Tibial artery (tissue), 4 donors: ENCODE measurements at regions of chr12 and their contacts with region 1.

Region 1: DNA sequence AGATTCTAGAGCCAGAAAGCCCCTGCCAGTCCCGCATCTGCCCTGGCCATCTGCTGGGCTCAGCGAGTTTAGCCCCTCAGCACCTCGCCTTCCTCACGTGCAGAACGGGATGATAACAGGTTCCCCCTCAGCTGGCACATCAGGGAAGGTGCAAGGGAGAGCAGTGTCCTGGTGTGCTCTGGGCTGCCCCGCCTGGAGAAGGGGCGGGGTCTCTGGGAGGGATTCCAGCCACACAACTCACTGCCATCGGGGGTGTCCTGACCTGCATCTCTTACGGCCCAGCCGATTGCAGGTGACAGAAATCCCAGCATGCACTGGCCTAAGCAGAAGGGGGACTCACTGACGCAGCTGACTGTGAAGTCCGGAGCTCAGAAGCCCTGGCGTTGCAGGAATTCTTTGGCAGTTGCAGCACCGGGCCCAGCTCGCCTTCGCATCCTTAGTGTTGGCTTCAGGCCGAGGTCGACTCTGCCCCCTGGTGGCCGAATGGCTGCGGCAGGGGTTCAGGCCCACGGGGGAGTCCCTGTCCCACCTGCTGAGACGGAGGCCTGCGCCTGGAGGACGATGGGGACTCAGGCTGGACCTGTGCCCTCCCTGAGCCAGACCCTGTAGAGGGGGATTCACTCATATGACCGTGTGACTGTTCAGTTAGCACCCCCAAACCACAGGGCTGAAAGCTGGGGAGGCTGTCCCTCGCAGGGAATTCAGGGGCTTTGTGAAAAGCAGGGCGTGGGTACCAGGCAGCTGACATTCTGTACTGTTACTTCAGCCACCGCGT is 178.6 kb downstream of the ADGRD1 start:
- DNase-seq: peak; percentile 64 to 66
- H3K4me3 ChIP-seq: no peak overlapping the region
- H3K27ac ChIP-seq: no peak overlapping the region
- H3K4me1 ChIP-seq: peaks cover 0 to 11% (median 8%) of the 10 kb centered on the region in 4 donors
- H3K27me3 ChIP-seq: no peaks in the 10 kb centered on the region
- CTCF ChIP-seq: peak; percentile 63 to 70

Region 2: GRCh38 chr12:130916251-130916911 is 215.9 kb before region 1 on chr12:
- intact Hi-C with region 1: loop called (anchors 2 kb)
- DNase-seq: peak; percentile 61 to 69
- H3K4me3 ChIP-seq: peak overlapping the region in 1 of 2 donors; percentile 29
- H3K27ac ChIP-seq: no peak overlapping the region
- H3K4me1 ChIP-seq: peaks cover 0 to 8% (median 0%) of the 10 kb centered on the region in 4 donors
- H3K27me3 ChIP-seq: peaks cover 0 to 19% of the 10 kb centered on the region in 2 donors
- CTCF ChIP-seq: peak; percentile 97

Region 3: GRCh38 chr12:131046813-131047788 is 85.2 kb before region 1 on chr12:
- intact Hi-C with region 1: no loop called
- DNase-seq: peak in 1 of 2 donors; percentile 70
- H3K4me3 ChIP-seq: no peak overlapping the region
- H3K27ac ChIP-seq: no peak overlapping the region
- H3K4me1 ChIP-seq: no peaks in the 10 kb centered on the region
- H3K27me3 ChIP-seq: no peaks in the 10 kb centered on the region
- CTCF ChIP-seq: no peak

Region 4: GRCh38 chr12:131092901-131093603 is 39.3 kb before region 1 on chr12:
- intact Hi-C with region 1: no loop called
- DNase-seq: peak; percentile 18 to 61
- H3K4me3 ChIP-seq: no peak overlapping the region
- H3K27ac ChIP-seq: no peak overlapping the region
- H3K4me1 ChIP-seq: no peaks in the 10 kb centered on the region
- H3K27me3 ChIP-seq: no peaks in the 10 kb centered on the region
- CTCF ChIP-seq: no peak